Adrenal gland (tissue), 19 donors: ENCODE measurements at regions of chr3 and their contacts with region 1.

Region 1: DNA sequence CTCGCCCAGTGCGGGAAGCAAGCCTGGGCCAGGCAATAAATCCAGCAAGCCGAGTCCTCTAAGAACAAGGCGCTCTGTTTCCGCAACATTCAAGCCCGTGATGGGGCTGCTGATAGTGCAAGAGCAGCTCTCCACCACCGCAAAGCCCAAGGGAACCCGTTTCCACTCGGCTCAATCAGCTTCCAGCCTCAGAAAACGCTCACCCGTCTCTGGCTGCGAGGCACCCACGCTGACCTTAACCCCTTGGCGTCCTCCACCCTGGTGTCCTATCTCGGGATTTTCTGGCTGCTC is 17.8 kb downstream of the SPATA12 start:
- DNase-seq: peak; percentile 53 to 84 (median 78)
- H3K4me3 ChIP-seq: peak overlapping the region; percentile 58 to 75 (median 72)
- H3K27ac ChIP-seq: peak overlapping the region in 3 of 5 donors; percentile 38 to 81 (median 68)
- H3K4me1 ChIP-seq: peaks cover 9 to 10% of the 10 kb centered on the region in 2 donors
- H3K27me3 ChIP-seq: no peaks in the 10 kb centered on the region
- CTCF ChIP-seq: peak in 3 of 6 experiments; percentile 12 to 30 (median 15)
- POLR2A ChIP-seq: peak in 1 of 2 donors; percentile 64

Region 2: GRCh38 chr3:56997675-56998074 is 80.6 kb before region 1 on chr3:
- intact Hi-C with region 1: loop called (anchors 2 to 5 kb)
- DNase-seq: no peak
- H3K4me3 ChIP-seq: no peak overlapping the region
- H3K27ac ChIP-seq: peak overlapping the region in 2 of 5 donors; percentile 26 to 62
- H3K4me1 ChIP-seq: peaks cover 0 to 7% of the 10 kb centered on the region in 2 donors
- H3K27me3 ChIP-seq: no peaks in the 10 kb centered on the region
- CTCF ChIP-seq: no peak
- POLR2A ChIP-seq: no peak

Region 3: GRCh38 chr3:57026918-57027317 is 51.4 kb before region 1 on chr3:
- intact Hi-C with region 1: loop called in 1 of 2 experiments (anchors 10 kb)
- DNase-seq: peak; percentile 60 to 92 (median 89)
- H3K4me3 ChIP-seq: no peak overlapping the region
- H3K27ac ChIP-seq: peak overlapping the region in 2 of 5 donors; percentile 19 to 63
- H3K4me1 ChIP-seq: peaks cover 24% of the 10 kb centered on the region in 2 donors
- H3K27me3 ChIP-seq: no peaks in the 10 kb centered on the region
- CTCF ChIP-seq: no peak
- POLR2A ChIP-seq: no peak

Region 4: DNA sequence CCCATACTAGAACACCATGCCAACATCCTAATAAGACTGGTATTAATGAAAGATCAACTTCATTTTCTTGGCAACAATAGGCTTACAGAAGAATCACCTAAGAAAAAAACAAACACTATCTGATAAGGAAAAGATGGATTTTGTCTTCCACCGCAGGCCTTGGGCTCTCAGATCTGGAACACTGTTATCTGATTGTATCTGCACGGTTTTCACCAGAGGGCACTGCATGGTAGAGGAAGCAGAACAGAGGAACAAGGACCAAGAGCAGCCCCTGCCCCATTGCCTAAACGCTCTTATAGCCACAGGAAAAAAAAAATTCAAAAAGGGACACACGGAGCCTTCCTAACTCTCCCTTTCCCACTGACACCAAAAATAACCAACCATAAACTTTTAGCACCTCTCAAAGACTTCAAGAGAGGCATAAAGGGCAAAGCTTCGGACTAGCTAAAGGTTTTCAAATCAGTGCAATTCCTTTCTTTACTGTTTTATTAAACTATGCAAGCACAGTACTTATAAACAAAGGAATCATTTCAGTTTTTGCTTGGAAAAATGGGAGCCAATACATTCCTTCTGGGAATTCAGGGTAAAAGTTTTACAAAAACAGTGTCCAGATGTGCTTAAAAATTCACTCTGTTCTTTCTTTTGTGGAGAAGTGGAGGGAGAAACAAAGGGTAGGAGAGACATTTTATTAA is 63.6 kb after region 1 on chr3:
- intact Hi-C with region 1: no loop called
- DNase-seq: peak in 2 of 7 donors; percentile 26 to 43
- H3K4me3 ChIP-seq: no peak overlapping the region
- H3K27ac ChIP-seq: no peak overlapping the region
- H3K4me1 ChIP-seq: peaks cover 0 to 7% of the 10 kb centered on the region in 2 donors
- H3K27me3 ChIP-seq: no peaks in the 10 kb centered on the region
- CTCF ChIP-seq: no peak
- POLR2A ChIP-seq: no peak

Region 5: DNA sequence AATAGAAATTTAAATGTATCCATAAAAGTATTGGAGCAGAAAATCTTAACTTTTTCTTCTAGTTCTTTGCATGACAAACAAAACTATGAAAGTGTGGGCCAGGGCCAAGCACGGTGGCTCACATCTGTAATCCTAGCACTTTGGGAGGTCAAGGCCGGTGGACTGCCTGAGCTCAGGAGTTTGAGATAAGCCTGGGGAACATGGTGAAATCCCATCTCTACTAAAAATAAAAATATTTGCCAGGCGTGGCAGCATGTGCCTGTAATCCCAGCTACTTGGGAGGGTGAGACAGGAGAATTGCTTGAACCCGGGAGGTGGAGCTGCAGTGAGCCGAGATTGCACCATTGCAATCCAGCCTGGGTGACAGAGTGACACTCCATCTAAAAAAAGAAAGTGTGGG is 307.2 kb after region 1 on chr3:
- intact Hi-C with region 1: no loop called
- DNase-seq: peak; percentile 40 to 89 (median 83)
- H3K4me3 ChIP-seq: no peak overlapping the region
- H3K27ac ChIP-seq: no peak overlapping the region
- H3K4me1 ChIP-seq: peaks cover 0 to 7% of the 10 kb centered on the region in 2 donors
- H3K27me3 ChIP-seq: no peaks in the 10 kb centered on the region
- CTCF ChIP-seq: no peak
- POLR2A ChIP-seq: no peak